Dendritic cell treated with granulocyte-macrophage colony-stimulating factor and Interleukin-4, amounts not matched to agents 40 ng/mL and 50 ng/mL, for 4 days (primary cell): ENCODE measurements at regions of chr15 and their contacts with region 1.

Region 1: GRCh38 chr15:34367101-34368081 is at the start of gene LPCAT4:
- H3K4me3 Mint-ChIP-seq: peak within 1 kb of the TSS; percentile 93
- H3K27ac Mint-ChIP-seq: peak within 1 kb of the TSS; percentile 95
- H3K4me1 Mint-ChIP-seq: peaks cover 58% of the 10 kb centered on the region
- H3K27me3 Mint-ChIP-seq: no peaks in the 10 kb centered on the region

Region 2: DNA sequence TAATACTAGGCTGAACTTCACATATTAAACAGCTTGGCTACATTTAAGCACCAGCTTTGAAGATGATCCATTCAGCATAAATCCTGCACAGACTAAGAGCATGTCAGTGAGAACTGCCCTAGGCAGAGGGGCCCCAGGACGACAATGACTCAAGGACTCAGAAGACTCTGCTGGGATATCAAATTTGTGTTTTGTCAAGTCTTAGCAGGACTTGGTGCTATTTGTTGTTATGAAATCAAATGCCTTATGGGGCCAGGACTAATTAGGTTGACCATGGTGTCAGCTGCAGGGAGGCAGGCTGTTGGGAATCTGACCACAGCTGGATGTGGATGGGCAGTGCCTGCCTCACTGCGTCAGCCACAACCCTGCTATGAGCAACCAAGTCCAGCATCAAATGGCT is 964.8 kb before region 1 on chr15:
- intact Hi-C with region 1: no loop called
- H3K4me3 Mint-ChIP-seq: no peak overlapping the region
- H3K27ac Mint-ChIP-seq: no peak overlapping the region
- H3K4me1 Mint-ChIP-seq: no peaks in the 10 kb centered on the region
- H3K27me3 Mint-ChIP-seq: peaks cover 3% of the 10 kb centered on the region

Region 3: GRCh38 chr15:34101366-34102175 is 265.8 kb before region 1 on chr15 and contains the starts of genes EMC7 and PGBD4:
- intact Hi-C with region 1: loop called (anchors 10 kb)
- H3K4me3 Mint-ChIP-seq: peak within 1 kb of the TSS; percentile 99
- H3K27ac Mint-ChIP-seq: peak within 1 kb of the TSS; percentile 99
- H3K4me1 Mint-ChIP-seq: peaks cover 11% of the 10 kb centered on the region
- H3K27me3 Mint-ChIP-seq: no peaks in the 10 kb centered on the region

Region 4: GRCh38 chr15:34241372-34242330 is 125.7 kb before region 1 on chr15:
- intact Hi-C with region 1: loop called (anchors 1 kb)
- H3K4me3 Mint-ChIP-seq: no peak overlapping the region
- H3K27ac Mint-ChIP-seq: no peak overlapping the region
- H3K4me1 Mint-ChIP-seq: no peaks in the 10 kb centered on the region
- H3K27me3 Mint-ChIP-seq: no peaks in the 10 kb centered on the region

Region 5: GRCh38 chr15:34318277-34319079 is 48.9 kb before region 1 on chr15:
- intact Hi-C with region 1: loop called (anchors 1 kb)
- H3K4me3 Mint-ChIP-seq: peak overlapping the region; percentile 83
- H3K27ac Mint-ChIP-seq: peak overlapping the region; percentile 90
- H3K4me1 Mint-ChIP-seq: peaks cover 21% of the 10 kb centered on the region
- H3K27me3 Mint-ChIP-seq: no peaks in the 10 kb centered on the region

Region 6: GRCh38 chr15:34342737-34343575 is 24.4 kb before region 1 on chr15 and contains the starts of genes NOP10 and NUTM1:
- intact Hi-C with region 1: loop called (anchors 1 kb)
- H3K4me3 Mint-ChIP-seq: no peak within 1 kb of the TSS
- H3K27ac Mint-ChIP-seq: no peak within 1 kb of the TSS
- H3K4me1 Mint-ChIP-seq: peaks cover 24% of the 10 kb centered on the region
- H3K27me3 Mint-ChIP-seq: no peaks in the 10 kb centered on the region